ENCODE measurements at regions of chr13 and their contacts with region 1.

Region 1: GRCh38 chr13:80469853-80470381 is 129.0 kb upstream of the SPRY2 start:
- DNase-seq: peak; percentile 50 to 73
- ATAC-seq: peak; percentile 94 to 99 (median 98)
- H3K4me3 ChIP-seq: peak overlapping the region in 1 of 10 donors; percentile 10
- H3K27ac ChIP-seq: peak overlapping the region; percentile 67 to 90 (median 83)
- H3K4me1 ChIP-seq: peaks cover 0 to 40% (median 32%) of the 10 kb centered on the region in 9 donors
- H3K27me3 ChIP-seq: no peaks in the 10 kb centered on the region
- CTCF ChIP-seq: no peak

Region 2: DNA sequence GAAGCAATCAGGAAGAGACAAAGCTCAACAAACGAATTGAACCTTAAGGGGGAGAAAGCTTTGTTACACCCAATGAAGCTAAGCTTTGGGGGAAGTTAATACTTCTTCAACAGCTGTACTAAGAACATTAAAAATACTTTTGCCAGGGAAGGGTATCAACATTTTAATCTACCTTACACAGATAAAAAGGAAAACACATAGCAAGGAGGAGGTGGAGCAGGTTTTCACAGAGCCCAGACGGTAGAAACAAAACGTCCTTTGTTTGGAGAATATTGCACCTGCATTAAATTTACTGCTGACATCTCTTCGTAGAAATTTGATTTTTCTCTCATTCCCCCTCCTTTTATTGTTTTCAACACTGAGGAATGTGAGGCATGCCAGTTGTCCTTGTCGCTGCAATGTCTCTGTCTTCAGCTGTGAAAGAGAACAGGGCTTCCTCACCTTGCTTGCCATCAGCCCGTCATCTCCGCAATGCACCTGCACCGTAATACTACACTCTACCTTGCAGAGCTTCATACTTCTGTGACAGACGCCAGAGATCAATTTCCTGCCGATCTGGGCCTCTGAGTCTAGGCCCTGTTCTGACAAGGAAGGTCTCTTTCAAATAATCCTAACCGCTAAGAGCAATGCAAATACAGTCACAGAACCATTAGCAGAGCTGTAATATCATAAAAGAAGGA is 399.8 kb before region 1 on chr13:
- intact Hi-C with region 1: no loop called
- DNase-seq: no peak
- ATAC-seq: no peak
- H3K4me3 ChIP-seq: no peak overlapping the region
- H3K27ac ChIP-seq: no peak overlapping the region
- H3K4me1 ChIP-seq: no peaks in the 10 kb centered on the region
- H3K27me3 ChIP-seq: no peaks in the 10 kb centered on the region
- CTCF ChIP-seq: no peak

Region 3: DNA sequence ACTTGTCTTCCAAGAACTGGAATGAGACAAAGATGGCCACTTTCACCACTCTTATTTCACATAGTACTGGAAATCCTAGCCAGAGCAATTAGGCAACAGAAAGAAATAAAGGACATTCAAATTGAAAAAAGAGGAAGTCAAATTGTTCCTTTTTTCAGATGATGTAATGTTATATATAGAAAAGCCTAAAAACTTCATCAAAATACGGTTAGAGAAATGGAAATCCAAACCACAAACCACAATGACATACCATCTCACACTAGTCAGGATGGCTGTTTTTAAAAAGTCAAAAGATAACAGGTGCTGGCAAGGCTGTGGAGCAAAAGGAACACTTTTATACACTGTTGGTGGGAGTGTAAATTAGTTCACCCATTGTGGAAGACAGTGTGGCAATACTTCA is 15.7 kb before region 1 on chr13:
- intact Hi-C with region 1: loop called in 1 of 10 experiments (anchors 1 kb)
- DNase-seq: no peak
- ATAC-seq: peak in 1 of 8 donors; percentile 29
- H3K4me3 ChIP-seq: no peak overlapping the region
- H3K27ac ChIP-seq: no peak overlapping the region
- H3K4me1 ChIP-seq: peaks cover 0 to 42% (median 14%) of the 10 kb centered on the region in 9 donors
- H3K27me3 ChIP-seq: peaks cover 0 to 18% (median 0%) of the 10 kb centered on the region in 7 donors
- CTCF ChIP-seq: no peak

Region 4: DNA sequence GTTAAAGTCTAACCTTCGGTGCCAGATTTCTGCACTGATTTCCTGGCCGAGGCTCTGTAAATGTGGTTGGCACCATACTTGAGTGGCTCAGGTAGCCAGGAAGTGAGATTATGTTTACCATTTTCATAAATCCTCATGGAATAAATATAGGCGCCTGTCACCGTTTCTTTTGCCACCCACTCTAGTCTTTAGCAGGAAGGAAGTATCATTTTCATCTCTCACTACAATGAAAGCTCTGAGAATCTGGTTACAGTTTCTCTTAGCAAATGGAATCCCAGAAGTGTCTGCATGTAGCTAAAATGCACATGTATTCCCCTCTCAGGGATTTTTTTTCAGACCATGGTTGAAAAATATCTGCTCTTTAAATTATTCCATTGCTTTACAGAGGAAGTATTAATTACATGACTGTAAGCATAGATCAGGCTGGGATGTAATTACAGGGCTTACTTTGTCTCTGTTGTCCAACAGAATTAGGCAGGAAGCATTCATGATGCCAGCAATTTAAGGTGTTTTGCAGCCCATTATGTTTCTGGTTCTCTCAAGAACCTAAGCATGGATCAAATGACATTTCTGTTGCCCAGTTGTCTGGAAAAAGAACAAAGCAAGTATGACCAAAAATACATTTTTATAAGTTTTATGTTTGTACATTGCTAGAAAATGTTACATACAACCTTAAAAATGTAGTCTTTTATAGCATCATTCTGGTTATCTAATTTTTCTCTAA is 92.7 kb after region 1 on chr13:
- intact Hi-C with region 1: loop called in 1 of 10 experiments (anchors 10 kb)
- DNase-seq: no peak
- ATAC-seq: no peak
- H3K4me3 ChIP-seq: no peak overlapping the region
- H3K27ac ChIP-seq: peak overlapping the region in 3 of 10 donors; percentile 5 to 31 (median 10)
- H3K4me1 ChIP-seq: peaks cover 0 to 21% (median 4%) of the 10 kb centered on the region in 9 donors
- H3K27me3 ChIP-seq: no peaks in the 10 kb centered on the region
- CTCF ChIP-seq: no peak

Region 5: DNA sequence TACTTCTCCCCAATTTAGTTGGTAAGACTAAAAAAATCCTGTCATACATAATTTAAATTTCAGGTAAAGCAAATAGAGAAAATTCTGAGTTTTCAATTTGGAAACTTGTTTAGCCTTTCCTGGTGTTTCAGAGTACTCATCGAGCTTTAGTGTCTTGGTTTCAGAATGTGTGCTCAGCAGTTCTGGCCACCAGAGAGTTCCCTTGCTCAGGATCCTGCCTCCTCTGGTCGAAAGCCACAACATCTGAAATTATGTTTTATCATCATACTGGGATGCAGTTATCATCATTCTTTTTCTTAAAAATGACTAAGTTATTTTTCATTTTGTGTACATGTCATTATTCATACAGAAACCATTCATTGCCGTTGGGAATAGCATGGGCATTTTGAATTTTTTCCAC is 134.2 kb after region 1 on chr13:
- intact Hi-C with region 1: loop called in 2 of 10 experiments (anchors 5 to 10 kb)
- DNase-seq: peak in 1 of 2 donors; percentile 39
- ATAC-seq: peak in 7 of 8 donors; percentile 67 to 88 (median 80)
- H3K4me3 ChIP-seq: no peak overlapping the region
- H3K27ac ChIP-seq: peak overlapping the region in 9 of 10 donors; percentile 14 to 65 (median 35)
- H3K4me1 ChIP-seq: peaks cover 0 to 18% (median 5%) of the 10 kb centered on the region in 9 donors
- H3K27me3 ChIP-seq: no peaks in the 10 kb centered on the region
- CTCF ChIP-seq: peak in 5 of 9 donors; percentile 14 to 48 (median 35)

Measured in heart right ventricle (tissue), 16 donors.